Naive thymus-derived CD4-positive, alpha-beta T cell (primary cell): ENCODE measurements at regions of chr1 and their contacts with region 1.

Region 1: GRCh38 chr1:16440470-16441281 is at the start of gene NECAP2:
- DNase-seq: peak; percentile 79 to 95 (median 88)
- ATAC-seq: peak; percentile 95
- H3K4me3 ChIP-seq: peak within 1 kb of the TSS; percentile 94
- H3K4me3 Mint-ChIP-seq: peak within 1 kb of the TSS; percentile 93 to 100 (median 97)
- H3K27ac ChIP-seq: peak within 1 kb of the TSS; percentile 100
- H3K27ac Mint-ChIP-seq: peak within 1 kb of the TSS; percentile 88 to 98 (median 96)
- H3K4me1 ChIP-seq: peaks cover 17 to 33% of the 10 kb centered on the region in 2 donors
- H3K4me1 Mint-ChIP-seq: peaks cover 19 to 45% (median 34%) of the 10 kb centered on the region in 7 donors
- H3K27me3 ChIP-seq: no peaks in the 10 kb centered on the region
- H3K27me3 Mint-ChIP-seq: no peaks in the 10 kb centered on the region
- total RNA-seq, gene NECAP2: 98.2 to 161 (median 148) TPM

Region 2: DNA sequence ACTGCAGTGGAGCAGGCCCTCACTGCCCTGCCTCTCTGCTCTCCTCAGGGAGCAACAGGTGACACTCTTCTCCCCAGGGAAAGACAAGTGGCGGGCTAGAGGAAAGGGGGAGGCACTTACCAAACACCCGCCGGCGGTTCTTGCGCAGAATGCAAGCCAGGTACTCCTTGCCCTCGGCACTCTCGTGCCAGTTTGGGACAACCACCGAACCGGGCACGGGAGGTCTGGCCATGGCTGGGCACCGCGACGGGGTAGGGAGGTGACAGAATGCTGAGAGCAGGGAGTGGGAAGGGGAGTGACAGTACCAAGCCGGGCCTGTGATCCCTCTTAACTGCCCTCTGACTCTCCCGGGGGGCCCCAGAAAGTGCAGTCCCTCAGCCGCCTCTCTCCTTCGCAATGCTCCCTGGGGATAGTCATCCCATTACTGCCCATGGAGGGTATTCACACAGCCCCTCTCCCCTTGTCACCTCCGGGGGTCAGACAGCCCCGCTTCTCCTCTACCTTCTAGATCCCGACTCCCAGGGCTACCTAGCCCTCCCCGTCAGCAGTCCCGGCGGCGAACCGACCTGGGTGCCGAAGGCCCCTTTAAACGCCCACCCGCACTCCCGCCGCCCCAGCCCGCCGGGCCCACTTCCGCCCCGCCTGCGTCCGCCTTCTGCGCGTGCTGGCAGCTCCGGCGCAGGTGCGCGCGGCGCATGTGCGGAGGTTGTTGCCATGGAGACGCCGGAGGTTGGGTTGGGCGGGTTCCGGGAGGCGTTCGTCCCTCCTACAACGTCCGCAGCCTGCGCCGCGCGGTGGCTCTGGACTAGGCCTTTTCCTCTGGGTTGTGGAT is 203.9 kb before region 1 on chr1 and contains the start of gene CPLANE2:
- CTCF ChIA-PET with region 1: no interaction called
- POLR2A ChIA-PET with region 1: no interaction called
- intact Hi-C with region 1: loop called in 1 of 2 experiments (anchors 2 kb)
- DNase-seq: peak; percentile 91 to 99 (median 94)
- ATAC-seq: peak; percentile 89
- H3K4me3 ChIP-seq: peak within 1 kb of the TSS; percentile 94
- H3K4me3 Mint-ChIP-seq: peak within 1 kb of the TSS; percentile 85 to 95 (median 92)
- H3K27ac ChIP-seq: peak within 1 kb of the TSS; percentile 78
- H3K27ac Mint-ChIP-seq: peak within 1 kb of the TSS; percentile 91 to 97 (median 95)
- H3K4me1 ChIP-seq: peaks cover 15 to 19% of the 10 kb centered on the region in 2 donors
- H3K4me1 Mint-ChIP-seq: peaks cover 0 to 28% (median 23%) of the 10 kb centered on the region in 7 donors
- H3K27me3 ChIP-seq: no peaks in the 10 kb centered on the region
- H3K27me3 Mint-ChIP-seq: no peaks in the 10 kb centered on the region
- total RNA-seq, gene CPLANE2: 6.6 to 11.4 (median 8.8) TPM

Region 3: GRCh38 chr1:16334655-16335340 is 105.9 kb before region 1 on chr1:
- CTCF ChIA-PET with region 1: no interaction called
- POLR2A ChIA-PET with region 1: no interaction called
- intact Hi-C with region 1: no loop called
- DNase-seq: no peak
- ATAC-seq: no peak
- H3K4me3 ChIP-seq: no peak overlapping the region
- H3K4me3 Mint-ChIP-seq: no peak overlapping the region
- H3K27ac ChIP-seq: no peak overlapping the region
- H3K27ac Mint-ChIP-seq: no peak overlapping the region
- H3K4me1 ChIP-seq: peaks cover 0 to 3% of the 10 kb centered on the region in 2 donors
- H3K4me1 Mint-ChIP-seq: peaks cover 23 to 53% (median 47%) of the 10 kb centered on the region in 7 donors
- H3K27me3 ChIP-seq: no peaks in the 10 kb centered on the region
- H3K27me3 Mint-ChIP-seq: no peaks in the 10 kb centered on the region

Region 4: DNA sequence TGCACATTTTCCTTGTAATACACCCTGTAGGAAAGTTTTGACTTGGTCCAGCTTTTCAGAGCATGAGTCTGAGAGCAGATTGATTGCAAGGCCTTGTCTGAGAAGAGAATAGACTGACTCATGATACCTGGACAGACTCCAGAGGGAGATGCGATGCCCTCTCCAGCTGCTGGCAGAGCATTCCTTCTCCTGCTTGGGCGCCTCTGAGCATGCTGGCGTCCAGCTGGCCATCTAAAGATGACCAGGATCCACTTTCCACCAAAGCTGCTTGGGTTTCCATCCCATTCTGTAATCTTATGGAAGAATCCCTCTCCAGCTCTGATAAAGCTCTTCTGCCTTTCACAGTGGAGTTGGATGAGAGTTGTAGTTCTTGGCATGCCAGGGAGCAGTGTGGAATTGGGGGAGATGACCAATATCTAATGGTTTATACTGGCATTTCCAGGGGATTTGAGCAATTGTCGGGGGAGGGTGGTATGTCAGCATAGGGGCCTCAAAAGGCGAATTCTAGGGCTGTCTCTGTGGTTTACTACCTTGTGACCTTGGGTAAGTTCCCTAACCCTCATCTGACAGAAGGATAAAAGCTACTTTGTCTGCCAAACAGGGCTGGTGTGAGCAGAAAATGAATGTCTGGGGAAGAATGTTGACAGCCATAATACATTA is 54.1 kb before region 1 on chr1:
- CTCF ChIA-PET with region 1: no interaction called
- POLR2A ChIA-PET with region 1: interaction called, 6 read pairs
- intact Hi-C with region 1: loop called (anchors 1 to 5 kb)
- DNase-seq: no peak
- ATAC-seq: peak; percentile 77
- H3K4me3 ChIP-seq: no peak overlapping the region
- H3K4me3 Mint-ChIP-seq: peak overlapping the region; percentile 22 to 84 (median 76)
- H3K27ac ChIP-seq: peak overlapping the region; percentile 54
- H3K27ac Mint-ChIP-seq: peak overlapping the region; percentile 39 to 91 (median 77)
- H3K4me1 ChIP-seq: peaks cover 22 to 51% of the 10 kb centered on the region in 2 donors
- H3K4me1 Mint-ChIP-seq: peaks cover 61 to 86% (median 75%) of the 10 kb centered on the region in 7 donors
- H3K27me3 ChIP-seq: no peaks in the 10 kb centered on the region
- H3K27me3 Mint-ChIP-seq: no peaks in the 10 kb centered on the region

Region 5: GRCh38 chr1:16451841-16452528 is 11.3 kb after region 1 on chr1:
- CTCF ChIA-PET with region 1: interaction called, 3 read pairs
- POLR2A ChIA-PET with region 1: interaction called, 12 read pairs
- intact Hi-C with region 1: no loop called
- DNase-seq: no peak
- ATAC-seq: no peak
- H3K4me3 ChIP-seq: no peak overlapping the region
- H3K4me3 Mint-ChIP-seq: peak overlapping the region in 1 of 10 donors; percentile 12
- H3K27ac ChIP-seq: no peak overlapping the region
- H3K27ac Mint-ChIP-seq: peak overlapping the region in 7 of 9 donors; percentile 8 to 89 (median 59)
- H3K4me1 ChIP-seq: peaks cover 5 to 10% of the 10 kb centered on the region in 2 donors
- H3K4me1 Mint-ChIP-seq: peaks cover 18 to 51% (median 46%) of the 10 kb centered on the region in 7 donors
- H3K27me3 ChIP-seq: no peaks in the 10 kb centered on the region
- H3K27me3 Mint-ChIP-seq: no peaks in the 10 kb centered on the region

Region 6: DNA sequence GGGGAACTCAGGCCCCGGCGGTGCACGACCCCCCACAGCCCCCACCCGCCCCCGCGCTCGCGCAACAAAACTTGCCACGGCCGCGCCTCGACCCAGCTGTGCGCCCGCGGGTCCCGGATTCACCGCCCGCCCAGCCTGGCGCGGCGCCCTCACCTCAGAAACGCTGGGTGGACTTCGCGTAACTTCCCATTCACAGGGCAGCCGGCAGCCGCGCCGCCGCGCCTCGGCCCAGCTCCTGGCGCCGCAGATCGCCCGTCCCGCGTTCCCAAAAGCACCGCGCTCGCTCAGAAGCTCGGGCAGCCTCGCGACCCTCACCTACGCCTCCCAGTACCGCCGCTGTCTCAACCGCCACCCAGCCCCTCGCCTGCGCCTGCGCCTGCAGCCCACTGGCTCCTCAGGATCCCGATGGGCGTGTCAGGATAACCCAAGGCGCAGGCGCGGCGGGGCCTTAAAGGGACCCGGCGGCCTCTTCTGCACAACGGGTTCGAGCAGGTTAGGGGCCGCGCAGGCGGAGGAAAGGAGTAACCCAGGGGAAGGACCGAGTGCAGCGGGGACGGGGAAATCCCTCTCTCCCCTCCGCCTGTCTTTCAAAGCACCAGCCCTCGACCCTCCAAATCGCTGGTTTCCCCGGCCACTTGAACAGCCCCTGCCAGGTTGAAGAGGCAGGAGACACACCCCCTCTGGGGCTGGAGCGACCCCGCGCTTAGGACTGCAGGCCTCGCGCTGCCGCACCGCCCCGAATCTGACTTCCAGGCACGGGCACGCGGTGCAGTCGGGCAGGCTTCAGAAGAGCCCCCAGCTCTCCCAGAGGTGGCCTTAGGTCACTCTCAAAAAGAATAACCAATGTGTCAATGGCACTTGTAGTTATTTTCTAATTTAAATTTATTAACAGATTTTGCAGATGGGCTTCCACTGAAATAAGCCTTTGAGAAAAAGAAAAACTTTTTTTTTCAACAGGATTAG is 172.8 kb after region 1 on chr1 and contains the start of gene NBPF1:
- CTCF ChIA-PET with region 1: no interaction called
- POLR2A ChIA-PET with region 1: no interaction called
- intact Hi-C with region 1: loop called (anchors 5 kb)
- DNase-seq: peak; percentile 79 to 97 (median 87)
- ATAC-seq: peak; percentile 93
- H3K4me3 ChIP-seq: peak within 1 kb of the TSS; percentile 72
- H3K4me3 Mint-ChIP-seq: no peak within 1 kb of the TSS
- H3K27ac ChIP-seq: peak within 1 kb of the TSS; percentile 70
- H3K27ac Mint-ChIP-seq: no peak within 1 kb of the TSS
- H3K4me1 ChIP-seq: peaks cover 15 to 16% of the 10 kb centered on the region in 2 donors
- H3K4me1 Mint-ChIP-seq: no peaks in the 10 kb centered on the region
- H3K27me3 ChIP-seq: no peaks in the 10 kb centered on the region
- H3K27me3 Mint-ChIP-seq: no peaks in the 10 kb centered on the region
- total RNA-seq, gene NBPF1: 7.0 to 25.7 (median 20.7) TPM